ENCODE measurements at regions of chr5 and their contacts with region 1.

Region 1: DNA sequence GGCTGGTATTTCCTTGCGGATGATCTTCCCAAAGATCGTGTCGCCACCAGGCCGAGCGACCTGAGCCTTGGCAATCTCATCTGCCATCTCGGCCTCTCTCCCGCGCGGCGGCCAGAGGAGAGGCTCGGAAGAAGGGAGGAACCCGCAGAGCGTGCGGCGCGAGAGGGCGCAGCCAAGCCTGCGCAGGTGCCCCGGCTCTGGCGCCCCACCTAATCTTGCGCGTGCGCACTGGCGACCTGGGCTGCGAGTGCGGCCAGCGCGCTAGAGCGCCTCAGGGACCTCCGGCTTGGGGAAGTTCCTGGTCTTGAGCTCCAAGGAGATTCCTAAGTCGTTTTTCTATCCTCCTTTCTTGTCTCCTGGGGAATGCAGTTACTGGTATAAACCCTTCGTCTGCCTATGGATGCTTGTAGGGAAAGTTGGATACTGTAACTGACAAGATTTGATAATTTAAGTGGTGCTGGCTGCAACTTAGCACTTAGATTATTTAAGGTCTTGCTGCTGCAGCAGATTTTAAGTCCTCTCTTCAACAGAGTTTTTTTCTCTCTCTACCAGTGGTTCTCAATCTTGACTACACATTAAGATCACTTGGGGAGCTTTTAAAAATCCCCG is at the start of gene HINT1:
- DNase-seq: peak; percentile 93 to 97
- ATAC-seq: peak; percentile 96
- H3K4me3 ChIP-seq: peak within 1 kb of the TSS; percentile 50 to 89
- H3K27ac ChIP-seq: peak within 1 kb of the TSS; percentile 73 to 76
- H3K4me1 ChIP-seq: no peaks in the 10 kb centered on the region
- H3K27me3 ChIP-seq: no peaks in the 10 kb centered on the region
- total RNA-seq, gene HINT1: 107 to 133 TPM

Region 2: GRCh38 chr5:131209506-131210150 is 44.4 kb after region 1 on chr5:
- intact Hi-C with region 1: no loop called
- DNase-seq: peak in 1 of 2 donors; percentile 48
- ATAC-seq: no peak
- H3K4me3 ChIP-seq: no peak overlapping the region
- H3K27ac ChIP-seq: no peak overlapping the region
- H3K4me1 ChIP-seq: no peaks in the 10 kb centered on the region
- H3K27me3 ChIP-seq: no peaks in the 10 kb centered on the region

Region 3: DNA sequence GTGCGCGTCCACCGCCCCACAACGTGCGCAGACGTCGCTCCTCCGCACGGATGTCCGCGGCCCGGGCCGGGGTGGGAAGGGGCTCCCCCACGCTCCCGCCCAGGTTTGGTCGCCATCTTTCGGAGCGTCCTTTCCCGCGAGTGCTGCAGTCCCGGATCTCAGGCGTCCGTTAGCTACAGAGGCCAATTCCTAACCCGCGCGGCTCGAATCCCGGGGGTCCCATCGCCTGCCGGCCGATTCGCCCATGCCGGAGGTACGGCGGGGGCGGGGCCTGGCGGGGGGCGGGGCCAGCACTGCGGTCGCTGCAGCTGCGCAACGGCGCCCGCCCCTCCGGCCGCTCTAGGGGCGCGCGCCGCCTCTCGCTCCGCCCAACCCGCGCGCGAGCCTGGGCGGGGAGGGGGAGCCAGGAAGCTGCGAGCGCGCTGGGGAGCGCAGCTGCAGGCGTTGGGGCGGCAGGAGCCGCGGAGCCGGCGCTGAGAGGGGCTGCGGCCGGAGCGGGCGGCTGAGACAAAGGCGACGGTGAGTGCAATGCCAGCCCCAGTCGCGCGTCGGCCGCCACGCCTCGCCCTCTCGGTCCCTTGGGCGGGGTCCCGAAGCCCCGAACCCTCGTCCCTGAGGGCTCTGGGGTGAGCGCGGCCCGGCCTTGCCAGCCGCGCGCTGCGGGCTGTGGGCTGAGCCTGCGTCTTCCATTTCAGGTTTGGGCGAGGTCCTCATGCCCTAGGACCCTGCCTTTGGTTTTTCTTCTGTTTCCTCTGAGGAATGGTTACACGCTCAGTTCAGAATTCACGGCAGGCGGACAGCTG is 98.6 kb after region 1 on chr5 and contains the start of gene CDC42SE2:
- intact Hi-C with region 1: loop called (anchors 2 to 5 kb)
- DNase-seq: peak; percentile 89 to 94
- ATAC-seq: peak; percentile 98
- H3K4me3 ChIP-seq: peak within 1 kb of the TSS; percentile 91 to 97
- H3K27ac ChIP-seq: peak within 1 kb of the TSS in 1 of 2 donors; percentile 29
- H3K4me1 ChIP-seq: peaks cover 0 to 1% of the 10 kb centered on the region in 2 donors
- H3K27me3 ChIP-seq: no peaks in the 10 kb centered on the region
- total RNA-seq, gene CDC42SE2: 20.4 to 25.6 TPM

Region 4: DNA sequence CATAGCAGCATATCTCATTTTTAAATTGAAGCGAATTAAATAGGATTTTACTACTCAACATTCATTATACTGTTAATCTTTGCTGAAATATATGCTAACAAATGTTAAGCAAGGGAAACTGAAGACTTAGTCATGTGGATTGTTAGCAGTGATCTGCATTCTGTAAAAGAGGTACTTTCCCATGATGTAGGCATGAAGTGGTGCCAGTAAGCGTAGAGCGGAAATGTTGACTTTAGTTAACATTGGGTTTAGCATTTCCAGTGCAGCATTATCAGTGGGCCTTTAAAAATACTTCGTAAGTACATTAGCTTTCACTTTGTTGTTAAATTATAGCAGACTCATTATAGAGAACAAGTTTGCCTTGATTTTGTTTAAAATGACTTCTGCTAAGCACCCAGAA is 228.9 kb after region 1 on chr5:
- intact Hi-C with region 1: loop called in 1 of 2 experiments (anchors 10 kb)
- DNase-seq: no peak
- ATAC-seq: peak; percentile 46
- H3K4me3 ChIP-seq: no peak overlapping the region
- H3K27ac ChIP-seq: no peak overlapping the region
- H3K4me1 ChIP-seq: peaks cover 3 to 7% of the 10 kb centered on the region in 2 donors
- H3K27me3 ChIP-seq: no peaks in the 10 kb centered on the region

Region 5: GRCh38 chr5:131417240-131417869 is 252.1 kb after region 1 on chr5:
- intact Hi-C with region 1: loop called (anchors 1 to 10 kb)
- DNase-seq: peak; percentile 83 to 92
- ATAC-seq: peak; percentile 74
- H3K4me3 ChIP-seq: no peak overlapping the region
- H3K27ac ChIP-seq: no peak overlapping the region
- H3K4me1 ChIP-seq: no peaks in the 10 kb centered on the region
- H3K27me3 ChIP-seq: no peaks in the 10 kb centered on the region